ENCODE measurements at regions of chr7 and their contacts with region 1.

Region 1: GRCh38 chr7:141014524-141015395 is at the start of gene MRPS33:
- DNase-seq: peak; percentile 88 to 98 (median 97)
- H3K4me3 ChIP-seq: peak within 1 kb of the TSS; percentile 55 to 95 (median 78)
- H3K27ac ChIP-seq: peak within 1 kb of the TSS; percentile 57 to 97 (median 91)
- H3K27me3 ChIP-seq: no peaks in the 10 kb centered on the region
- CTCF ChIP-seq: peak; percentile 62 to 90 (median 80)
- total RNA-seq, gene MRPS33: 18.7 to 61.6 (median 43.0) TPM

Region 2: GRCh38 chr7:140517546-140518369 is 497.0 kb before region 1 on chr7:
- intact Hi-C with region 1: loop called in 1 of 2 experiments (anchors 5 kb)
- DNase-seq: peak; percentile 84 to 92 (median 89)
- H3K4me3 ChIP-seq: no peak overlapping the region
- H3K27ac ChIP-seq: peak overlapping the region in 3 of 59 donors; percentile 19 to 51 (median 21)
- H3K27me3 ChIP-seq: no peaks in the 10 kb centered on the region
- CTCF ChIP-seq: peak; percentile 47 to 96 (median 90)

Region 3: GRCh38 chr7:140625908-140626868 is 388.6 kb before region 1 on chr7:
- intact Hi-C with region 1: no loop called
- DNase-seq: peak in 9 of 10 donors; percentile 29 to 74 (median 58)
- H3K4me3 ChIP-seq: peak overlapping the region in 1 of 59 donors; percentile 24
- H3K27ac ChIP-seq: peak overlapping the region in 39 of 59 donors; percentile 2 to 67 (median 44)
- H3K27me3 ChIP-seq: no peaks in the 10 kb centered on the region
- CTCF ChIP-seq: no peak

Region 4: GRCh38 chr7:140696680-140697446 is 317.9 kb before region 1 on chr7 and contains the start of gene NDUFB2:
- intact Hi-C with region 1: loop called in 1 of 2 experiments (anchors 5 kb)
- DNase-seq: peak; percentile 73 to 96 (median 84)
- H3K4me3 ChIP-seq: peak within 1 kb of the TSS; percentile 59 to 97 (median 86)
- H3K27ac ChIP-seq: peak within 1 kb of the TSS; percentile 72 to 100 (median 97)
- H3K27me3 ChIP-seq: no peaks in the 10 kb centered on the region
- CTCF ChIP-seq: peak in 26 of 56 donors; percentile 3 to 43 (median 17)
- total RNA-seq, gene NDUFB2: 147 to 282 (median 221) TPM

Region 5: DNA sequence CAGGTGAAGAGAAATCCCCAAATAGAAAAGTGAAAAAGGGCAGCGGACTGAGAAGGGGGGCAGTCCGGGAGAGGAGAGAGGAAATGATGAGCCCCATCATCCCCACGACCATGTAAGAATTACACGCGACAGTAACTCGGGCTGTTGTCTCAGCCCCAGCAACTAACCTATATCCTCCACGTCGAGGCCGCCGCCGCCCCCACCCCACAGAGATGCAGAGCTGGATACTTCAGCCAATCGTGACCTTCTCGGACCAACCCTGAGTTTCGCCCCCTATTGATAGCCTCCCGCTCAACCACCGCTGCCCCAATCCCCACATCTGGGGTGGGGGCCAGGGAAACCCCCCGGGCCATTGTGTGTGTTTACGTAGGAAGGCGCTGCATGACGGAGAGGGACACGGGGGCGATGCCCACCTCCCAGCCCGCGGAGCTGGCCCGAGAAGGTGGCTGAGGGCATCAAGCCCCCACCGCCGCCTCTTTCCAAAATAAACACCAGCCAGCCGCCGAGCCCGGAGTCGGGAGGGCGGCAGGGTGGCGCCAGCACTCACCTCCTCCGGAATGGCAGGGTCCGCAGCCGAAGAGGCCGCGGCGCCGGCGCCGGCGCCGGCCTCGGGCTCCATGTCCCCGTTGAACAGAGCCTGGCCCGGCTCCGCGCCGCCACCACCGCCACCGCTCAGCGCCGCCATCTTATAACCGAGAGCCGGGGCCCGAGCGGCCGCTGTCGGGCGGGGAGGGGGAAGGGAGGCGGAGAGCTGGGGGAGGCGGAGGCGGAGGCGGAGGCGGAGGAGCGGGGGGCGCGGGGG is 90.5 kb before region 1 on chr7:
- intact Hi-C with region 1: loop called in 1 of 2 experiments (anchors 2 kb)
- DNase-seq: peak; percentile 54 to 84 (median 74)
- H3K4me3 ChIP-seq: peak overlapping the region; percentile 62 to 99 (median 92)
- H3K27ac ChIP-seq: peak overlapping the region; percentile 92 to 100 (median 99)
- H3K27me3 ChIP-seq: no peaks in the 10 kb centered on the region
- CTCF ChIP-seq: peak in 55 of 56 donors; percentile 14 to 79 (median 56)

Region 6: GRCh38 chr7:141551094-141551781 is 536.5 kb after region 1 on chr7 and contains the start of gene AGK:
- intact Hi-C with region 1: loop called in 1 of 2 experiments (anchors 10 kb)
- DNase-seq: peak; percentile 54 to 87 (median 69)
- H3K4me3 ChIP-seq: peak within 1 kb of the TSS; percentile 62 to 98 (median 89)
- H3K27ac ChIP-seq: peak within 1 kb of the TSS in 58 of 59 donors; percentile 17 to 91 (median 68)
- H3K27me3 ChIP-seq: no peaks in the 10 kb centered on the region
- CTCF ChIP-seq: peak in 40 of 56 donors; percentile 7 to 60 (median 26)
- total RNA-seq, gene AGK: 33.6 to 74.7 (median 51.5) TPM